ENCODE measurements at regions of chr1 and their contacts with region 1.

Region 1: GRCh38 chr1:151539990-151540981 is at the start of gene TUFT1:
- DNase-seq: peak; percentile 96
- H3K4me3 ChIP-seq: peak within 1 kb of the TSS; percentile 63 to 70
- H3K27ac ChIP-seq: peak within 1 kb of the TSS; percentile 96 to 97
- H3K4me1 ChIP-seq: peaks cover 15% of the 10 kb centered on the region
- H3K27me3 ChIP-seq: no peaks in the 10 kb centered on the region
- CTCF ChIP-seq: peak in 2 of 4 experiments; percentile 4 to 17
- POLR2A ChIP-seq: peak; percentile 98
- total RNA-seq, gene TUFT1: 15.2 to 29.0 TPM

Region 2: GRCh38 chr1:151267760-151268159 is 272.5 kb before region 1 on chr1:
- intact Hi-C with region 1: no loop called
- DNase-seq: no peak
- H3K4me3 ChIP-seq: no peak overlapping the region
- H3K27ac ChIP-seq: no peak overlapping the region
- H3K4me1 ChIP-seq: no peaks in the 10 kb centered on the region
- H3K27me3 ChIP-seq: no peaks in the 10 kb centered on the region
- CTCF ChIP-seq: no peak
- POLR2A ChIP-seq: no peak

Region 3: DNA sequence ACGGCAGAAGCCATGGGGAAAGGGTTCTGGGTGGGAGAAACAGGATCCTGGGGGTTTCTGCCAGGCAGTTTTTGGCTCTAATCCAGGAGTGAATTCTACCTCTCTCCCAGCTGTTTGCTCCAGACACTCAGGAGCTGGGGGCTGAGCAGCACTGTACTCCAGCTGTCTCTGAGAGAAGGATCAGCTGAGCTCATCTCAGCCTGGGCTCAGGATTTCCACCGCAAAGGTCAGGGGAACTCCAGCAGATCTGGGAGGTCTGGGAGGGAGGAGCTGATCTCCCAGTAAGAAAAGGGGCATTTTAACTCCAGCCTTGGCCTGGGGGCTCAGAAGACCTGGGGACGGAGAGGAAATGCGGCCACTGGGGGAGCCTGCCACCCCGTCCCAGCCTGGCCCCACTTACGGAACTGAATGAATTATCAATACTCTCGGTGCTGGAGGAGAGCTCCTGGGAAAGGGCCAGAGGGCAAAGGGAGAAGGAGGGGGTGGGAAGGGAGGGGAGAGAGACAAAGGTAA is 230.4 kb before region 1 on chr1:
- intact Hi-C with region 1: loop called (anchors 10 kb)
- DNase-seq: no peak
- H3K4me3 ChIP-seq: no peak overlapping the region
- H3K27ac ChIP-seq: peak overlapping the region in 1 of 2 donors; percentile 24
- H3K4me1 ChIP-seq: peaks cover 4% of the 10 kb centered on the region
- H3K27me3 ChIP-seq: no peaks in the 10 kb centered on the region
- CTCF ChIP-seq: no peak
- POLR2A ChIP-seq: no peak

Region 4: DNA sequence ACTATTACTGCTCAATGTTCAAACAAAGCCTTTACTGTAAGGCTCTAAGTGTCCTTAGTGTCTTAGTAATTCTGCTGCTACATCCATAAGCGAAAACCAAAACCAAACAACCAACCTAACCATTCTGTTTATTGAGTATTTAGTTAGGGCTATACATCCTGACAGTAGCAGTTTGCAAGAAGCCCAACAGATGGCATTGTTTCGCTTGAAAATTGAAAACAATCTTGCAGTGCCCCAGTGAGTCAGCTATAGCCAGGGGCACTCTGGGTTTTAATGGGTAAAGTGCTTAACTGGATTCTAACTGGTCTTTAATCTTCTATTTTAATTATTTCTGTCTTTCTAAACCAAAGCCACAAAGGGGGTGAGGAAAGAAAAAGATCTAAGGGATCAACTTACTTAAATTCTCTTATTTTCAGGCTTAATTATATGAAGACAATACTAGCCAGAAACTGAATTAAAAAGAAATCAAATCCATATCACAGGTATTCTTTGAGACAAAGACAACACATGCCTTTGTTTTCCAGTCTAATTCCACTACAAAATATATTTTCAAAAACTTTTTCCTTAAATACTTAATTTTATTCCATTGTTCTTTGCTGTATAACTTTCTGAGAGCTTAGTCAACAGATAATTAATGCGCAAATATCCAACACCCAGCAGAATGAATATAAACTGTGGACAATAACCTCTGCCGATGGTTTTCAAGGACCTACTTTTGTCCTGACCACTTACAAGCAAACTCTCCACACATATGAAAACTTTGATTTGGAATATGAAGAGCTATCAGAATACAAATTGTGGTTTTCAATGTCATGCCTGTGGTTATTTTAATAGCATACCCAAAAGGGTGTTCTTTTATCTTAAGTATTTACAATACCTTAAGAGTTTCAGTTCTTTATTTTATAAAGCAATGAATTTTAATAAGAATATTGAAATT is 96.2 kb before region 1 on chr1:
- intact Hi-C with region 1: loop called (anchors 5 kb)
- DNase-seq: peak; percentile 71
- H3K4me3 ChIP-seq: no peak overlapping the region
- H3K27ac ChIP-seq: no peak overlapping the region
- H3K4me1 ChIP-seq: peaks cover 9% of the 10 kb centered on the region
- H3K27me3 ChIP-seq: no peaks in the 10 kb centered on the region
- CTCF ChIP-seq: peak in 3 of 4 experiments; percentile 49 to 80 (median 63)
- POLR2A ChIP-seq: no peak

Region 5: DNA sequence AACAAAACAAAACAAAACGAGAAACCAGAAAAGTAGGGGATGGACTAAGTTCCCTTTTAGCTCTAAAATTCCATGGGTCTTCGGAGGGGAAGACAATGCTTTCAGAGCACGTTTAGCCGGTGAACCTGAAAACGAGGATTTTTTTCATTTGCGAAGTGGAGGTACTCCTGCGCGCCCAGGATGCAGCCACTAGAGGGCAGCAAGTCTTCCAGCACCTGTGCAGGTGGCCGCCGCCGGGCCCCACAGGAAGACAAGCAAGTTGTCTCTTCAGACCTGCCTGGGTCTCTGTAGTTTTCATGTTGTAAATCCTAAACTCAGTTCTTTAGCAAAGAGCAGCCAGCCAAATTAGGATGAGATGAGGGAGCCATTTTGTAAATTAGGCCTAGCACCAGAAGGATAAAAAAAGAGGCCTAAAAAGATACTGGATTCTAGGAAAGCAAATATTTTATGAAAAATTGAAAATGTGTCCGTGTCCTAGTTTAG is 53.9 kb after region 1 on chr1:
- intact Hi-C with region 1: loop called (anchors 10 kb)
- DNase-seq: peak; percentile 85
- H3K4me3 ChIP-seq: no peak overlapping the region
- H3K27ac ChIP-seq: no peak overlapping the region
- H3K4me1 ChIP-seq: no peaks in the 10 kb centered on the region
- H3K27me3 ChIP-seq: no peaks in the 10 kb centered on the region
- CTCF ChIP-seq: peak; percentile 69 to 88 (median 86)
- POLR2A ChIP-seq: no peak

Region 6: DNA sequence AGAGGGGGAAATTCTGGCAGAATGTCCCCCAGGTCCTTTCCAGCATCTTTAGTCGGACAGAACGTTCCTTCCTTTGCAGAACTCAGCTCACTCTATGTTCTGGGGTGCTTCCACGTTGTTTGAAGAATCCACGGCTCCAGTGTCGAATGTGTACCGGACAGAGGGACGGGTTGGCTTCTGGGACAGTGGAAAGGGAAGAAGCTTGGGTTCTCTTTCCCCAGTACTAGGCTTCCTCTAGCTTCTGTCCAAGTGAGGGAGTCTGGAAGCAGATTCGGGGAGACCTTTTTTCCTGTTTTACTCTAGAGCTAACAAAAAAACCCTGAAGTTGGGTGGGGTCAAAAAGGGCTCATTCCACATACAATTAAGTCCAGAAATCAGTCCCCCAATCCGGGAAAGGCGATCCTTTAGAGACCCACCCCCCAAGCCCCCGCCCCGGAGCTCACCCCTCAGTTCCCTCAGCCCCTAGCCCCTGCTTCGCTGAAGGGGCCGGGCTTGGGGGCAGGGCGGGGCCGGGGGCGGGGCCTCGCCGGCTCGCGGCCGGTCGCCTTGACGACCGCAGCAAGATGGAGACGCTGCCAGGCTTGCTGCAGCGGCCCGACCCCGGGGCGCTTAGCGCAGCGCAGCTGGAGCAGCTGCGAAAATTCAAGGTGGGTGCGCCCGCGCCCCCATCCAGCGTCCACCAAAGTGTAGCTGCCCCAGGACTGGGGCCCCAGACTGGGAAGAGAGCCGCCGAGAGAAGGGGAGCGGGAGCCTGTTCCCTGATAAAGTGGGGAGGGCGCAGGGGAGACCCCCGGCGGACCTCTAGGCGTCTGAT is 180.9 kb after region 1 on chr1 and contains the start of gene RIIAD1:
- intact Hi-C with region 1: loop called (anchors 5 kb)
- DNase-seq: no peak
- H3K4me3 ChIP-seq: peak within 1 kb of the TSS; percentile 19 to 33
- H3K27ac ChIP-seq: peak within 1 kb of the TSS; percentile 53 to 65
- H3K4me1 ChIP-seq: no peaks in the 10 kb centered on the region
- H3K27me3 ChIP-seq: no peaks in the 10 kb centered on the region
- CTCF ChIP-seq: no peak
- POLR2A ChIP-seq: no peak
- total RNA-seq, gene RIIAD1: 7.8 TPM in 1 of 2 donors, not detected in the other